ENCODE measurements at regions of chr10 and their contacts with region 1.

Region 1: GRCh38 chr10:108544494-108545120 is 1378.7 kb downstream of the XPNPEP1 start:
- DNase-seq: peak; percentile 36
- H3K4me3 ChIP-seq: no peak overlapping the region
- H3K27ac ChIP-seq: no peak overlapping the region
- H3K4me1 ChIP-seq: no peaks in the 10 kb centered on the region
- H3K27me3 ChIP-seq: no peaks in the 10 kb centered on the region
- CTCF ChIP-seq: peak; percentile 75 to 93

Region 2: GRCh38 chr10:106705681-106706100 is 1838.9 kb before region 1 on chr10:
- CTCF ChIA-PET with region 1: no interaction called
- dilution Hi-C with region 1: no loop called
- in situ Hi-C with region 1: loop called in 1 of 2 experiments (anchors 25 kb)
- intact Hi-C with region 1: loop called (anchors 2 kb)
- DNase-seq: peak; percentile 31
- H3K4me3 ChIP-seq: no peak overlapping the region
- H3K27ac ChIP-seq: no peak overlapping the region
- H3K4me1 ChIP-seq: no peaks in the 10 kb centered on the region
- H3K27me3 ChIP-seq: no peaks in the 10 kb centered on the region
- CTCF ChIP-seq: peak; percentile 88

Region 3: GRCh38 chr10:107814865-107815487 is 729.6 kb before region 1 on chr10:
- CTCF ChIA-PET with region 1: no interaction called
- dilution Hi-C with region 1: no loop called
- in situ Hi-C with region 1: no loop called
- intact Hi-C with region 1: loop called (anchors 10 kb)
- DNase-seq: peak; percentile 63
- H3K4me3 ChIP-seq: no peak overlapping the region
- H3K27ac ChIP-seq: no peak overlapping the region
- H3K4me1 ChIP-seq: no peaks in the 10 kb centered on the region
- H3K27me3 ChIP-seq: no peaks in the 10 kb centered on the region
- CTCF ChIP-seq: peak; percentile 84 to 91

Region 4: GRCh38 chr10:108204479-108205305 is 339.9 kb before region 1 on chr10:
- CTCF ChIA-PET with region 1: no interaction called
- dilution Hi-C with region 1: no loop called
- in situ Hi-C with region 1: no loop called
- intact Hi-C with region 1: loop called (anchors 1 kb)
- DNase-seq: peak; percentile 55
- H3K4me3 ChIP-seq: no peak overlapping the region
- H3K27ac ChIP-seq: no peak overlapping the region
- H3K4me1 ChIP-seq: no peaks in the 10 kb centered on the region
- H3K27me3 ChIP-seq: no peaks in the 10 kb centered on the region
- CTCF ChIP-seq: peak; percentile 94 to 99

Region 5: GRCh38 chr10:109852475-109853037 is 1307.9 kb after region 1 on chr10:
- CTCF ChIA-PET with region 1: no interaction called
- dilution Hi-C with region 1: no loop called
- in situ Hi-C with region 1: no loop called
- intact Hi-C with region 1: loop called (anchors 5 kb)
- DNase-seq: peak; percentile 44
- H3K4me3 ChIP-seq: no peak overlapping the region
- H3K27ac ChIP-seq: no peak overlapping the region
- H3K4me1 ChIP-seq: no peaks in the 10 kb centered on the region
- H3K27me3 ChIP-seq: no peaks in the 10 kb centered on the region
- CTCF ChIP-seq: peak; percentile 94 to 96